SK-N-SH (cell line): ENCODE measurements at regions of chr15 and their contacts with region 1.

Region 1: DNA sequence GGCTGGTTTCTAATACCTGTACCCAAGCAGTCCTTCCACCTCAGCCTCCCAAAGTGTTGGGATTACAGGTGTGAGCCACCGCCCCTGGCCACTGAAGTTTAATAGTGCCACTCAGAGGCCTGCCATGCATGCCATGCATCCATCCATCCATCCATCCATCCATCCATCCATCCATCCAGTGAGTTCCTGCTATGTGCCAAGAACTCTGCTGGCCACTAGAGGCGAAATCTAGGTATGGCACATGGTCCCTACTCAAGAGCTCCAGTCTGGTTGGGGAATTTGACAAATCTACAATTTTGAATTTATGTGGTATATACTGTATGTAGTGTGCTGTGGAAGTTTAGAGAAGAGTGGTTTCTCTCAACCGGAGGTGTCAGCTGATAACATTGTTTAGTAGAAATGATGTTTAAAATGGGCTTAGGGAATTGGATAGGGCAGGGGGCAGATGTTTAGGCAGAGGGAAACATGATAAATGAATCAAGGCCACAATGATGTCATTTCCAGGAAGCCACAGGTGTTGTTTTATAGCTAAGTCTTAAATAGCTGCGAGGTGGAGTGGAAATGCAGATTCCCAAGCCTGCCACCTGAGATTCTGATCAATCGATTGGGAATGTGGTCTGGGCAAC is 384.4 kb upstream of the C2CD4B start:
- DNase-seq: peak; percentile 41
- H3K4me3 ChIP-seq: no peak overlapping the region
- H3K27ac ChIP-seq: no peak overlapping the region
- H3K4me1 ChIP-seq: peaks cover 6% of the 10 kb centered on the region in 2 experiments; a peak in 2 of 4 replicates
- H3K27me3 ChIP-seq: no peaks in the 10 kb centered on the region
- CTCF ChIP-seq: peak; percentile 66
- EP300 ChIP-seq: no peak
- RAD21 ChIP-seq: peak; percentile 64

Region 2: DNA sequence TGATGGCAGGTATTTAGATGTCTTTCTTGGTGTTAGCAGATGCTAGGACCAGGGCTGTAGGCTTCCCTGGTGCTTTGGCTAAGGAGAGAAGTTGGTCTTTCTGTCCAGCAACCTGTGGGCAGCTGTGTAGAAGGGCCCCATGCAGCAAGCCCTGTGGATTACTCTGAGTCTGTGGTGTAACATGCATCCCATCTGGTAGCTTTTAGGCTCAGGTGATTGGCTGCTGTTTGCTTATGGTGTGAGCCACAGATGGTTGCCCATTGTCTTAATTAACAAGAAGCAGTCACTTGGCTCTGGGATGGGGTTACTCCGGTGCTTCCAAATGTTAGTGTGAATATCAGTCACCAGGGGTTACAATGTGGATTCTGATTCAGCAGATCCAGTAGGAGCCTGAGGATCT is 15.8 kb before region 1 on chr15:
- CTCF ChIA-PET with region 1: interaction called, 17 read pairs
- POLR2A ChIA-PET with region 1: no interaction called
- DNase-seq: no peak
- H3K4me3 ChIP-seq: no peak overlapping the region
- H3K27ac ChIP-seq: no peak overlapping the region
- H3K4me1 ChIP-seq: peaks cover 0 to 14% of the 10 kb centered on the region in 2 experiments; a peak in 1 of 4 replicates
- H3K27me3 ChIP-seq: no peaks in the 10 kb centered on the region
- CTCF ChIP-seq: no peak
- EP300 ChIP-seq: no peak
- RAD21 ChIP-seq: no peak

Region 3: GRCh38 chr15:62539236-62539635 is 10.2 kb before region 1 on chr15:
- CTCF ChIA-PET with region 1: interaction called, 17 read pairs
- POLR2A ChIA-PET with region 1: no interaction called
- DNase-seq: no peak
- H3K4me3 ChIP-seq: no peak overlapping the region
- H3K27ac ChIP-seq: no peak overlapping the region
- H3K4me1 ChIP-seq: peaks cover 0 to 7% of the 10 kb centered on the region in 2 experiments; a peak in 1 of 4 replicates
- H3K27me3 ChIP-seq: no peaks in the 10 kb centered on the region
- CTCF ChIP-seq: no peak
- EP300 ChIP-seq: no peak
- RAD21 ChIP-seq: no peak

Region 4: DNA sequence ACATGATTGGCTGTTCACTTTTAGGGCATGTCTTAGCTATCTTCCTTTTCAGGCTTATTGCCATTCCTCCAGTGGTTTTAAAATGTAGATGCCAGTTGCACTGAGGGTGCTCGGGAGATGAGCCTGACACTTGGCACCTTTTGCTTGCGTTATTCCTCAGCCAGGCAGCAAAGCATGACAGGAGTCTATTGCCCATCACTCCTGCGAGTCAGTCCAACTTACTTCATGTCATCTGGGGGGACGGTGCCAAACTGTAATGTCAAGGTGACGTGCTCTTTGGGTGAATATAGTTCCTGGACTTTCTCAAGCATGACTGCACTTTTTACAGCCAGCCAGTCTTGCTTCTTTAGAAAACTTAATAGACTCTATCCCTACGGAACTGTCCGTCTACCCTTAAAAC is 21.6 kb after region 1 on chr15:
- CTCF ChIA-PET with region 1: no interaction called
- POLR2A ChIA-PET with region 1: no interaction called
- DNase-seq: no peak
- H3K4me3 ChIP-seq: no peak overlapping the region
- H3K27ac ChIP-seq: no peak overlapping the region
- H3K4me1 ChIP-seq: no peaks in the 10 kb centered on the region; a peak in 1 of 4 replicates
- H3K27me3 ChIP-seq: no peaks in the 10 kb centered on the region
- CTCF ChIP-seq: no peak
- EP300 ChIP-seq: no peak
- RAD21 ChIP-seq: no peak

Region 5: DNA sequence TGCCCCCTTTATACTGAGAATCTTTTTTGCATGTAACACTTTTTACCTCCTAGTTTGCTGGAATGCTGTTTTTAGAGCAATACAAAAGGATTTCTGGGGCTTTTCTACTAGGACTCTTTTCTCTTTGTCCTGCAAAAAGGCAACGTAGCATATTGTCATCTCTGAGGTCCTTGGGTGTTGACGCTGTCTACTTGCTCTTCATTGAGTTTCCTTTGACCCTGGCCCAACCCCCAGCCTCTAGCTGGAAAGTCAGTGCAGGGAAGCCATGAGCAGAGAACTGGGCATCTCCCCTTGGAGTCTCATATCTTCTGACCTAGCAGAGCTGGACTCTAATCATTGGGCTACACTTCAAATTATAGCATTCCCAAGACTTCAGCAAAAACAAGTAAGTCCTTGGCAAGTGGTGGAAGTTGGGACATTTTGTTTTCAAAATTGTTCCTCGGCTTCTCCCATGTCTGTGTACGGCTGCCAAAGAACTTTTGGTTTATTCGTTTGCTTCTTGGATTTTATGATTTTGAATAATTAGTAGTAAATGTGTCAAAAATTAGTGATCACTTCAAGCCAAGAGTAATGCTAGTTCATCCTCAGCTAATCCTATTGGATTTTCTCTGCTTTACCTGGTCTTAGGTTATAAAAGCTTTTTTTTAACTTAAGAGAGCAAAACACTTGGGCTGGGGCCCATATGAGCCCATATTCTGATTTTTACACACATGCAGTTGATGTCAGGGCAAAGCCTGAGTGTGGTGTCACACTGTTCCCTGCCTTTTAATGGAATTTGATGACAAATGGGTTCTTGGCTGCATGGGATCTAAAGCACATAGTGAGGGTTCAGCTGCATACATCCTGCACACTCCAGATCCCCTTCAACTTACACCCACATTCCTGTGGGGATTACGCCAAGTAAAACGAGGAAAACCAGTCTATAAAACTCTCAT is 35.1 kb after region 1 on chr15:
- CTCF ChIA-PET with region 1: no interaction called
- POLR2A ChIA-PET with region 1: no interaction called
- DNase-seq: no peak
- H3K4me3 ChIP-seq: no peak overlapping the region
- H3K27ac ChIP-seq: no peak overlapping the region
- H3K4me1 ChIP-seq: peaks cover 9% of the 10 kb centered on the region in 2 experiments
- H3K27me3 ChIP-seq: no peaks in the 10 kb centered on the region
- CTCF ChIP-seq: no peak
- EP300 ChIP-seq: no peak
- RAD21 ChIP-seq: no peak